ENCODE measurements at regions of chr3 and their contacts with region 1.

Region 1: GRCh38 chr3:57100046-57100695 is 39.7 kb downstream of the SPATA12 start:
- DNase-seq: peak; percentile 73
- H3K4me3 Mint-ChIP-seq: no peak overlapping the region
- H3K27ac Mint-ChIP-seq: no peak overlapping the region
- H3K4me1 Mint-ChIP-seq: no peaks in the 10 kb centered on the region
- H3K27me3 Mint-ChIP-seq: peaks cover 17% of the 10 kb centered on the region

Region 2: DNA sequence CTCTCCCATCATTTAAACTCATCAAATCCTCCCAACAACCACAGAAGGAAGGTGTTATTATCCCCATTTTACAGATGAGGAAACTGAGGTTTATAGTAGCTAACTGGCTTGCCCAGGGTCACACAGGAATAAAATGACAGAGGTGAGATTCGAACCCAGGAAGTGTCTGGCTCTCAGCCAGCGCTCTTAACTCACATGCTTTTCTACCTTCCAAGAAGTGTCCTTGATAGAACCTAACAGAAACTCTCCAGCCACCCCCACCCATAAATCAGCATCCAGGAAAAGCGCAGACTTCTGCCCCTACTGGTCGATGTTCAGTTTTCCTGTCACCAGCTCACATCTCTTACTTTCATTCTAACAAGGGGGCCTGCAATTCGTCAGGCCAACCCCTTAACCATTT is 12.0 kb after region 1 on chr3:
- CTCF ChIA-PET with region 1: interaction called, 18 read pairs
- DNase-seq: no peak
- H3K4me3 Mint-ChIP-seq: no peak overlapping the region
- H3K27ac Mint-ChIP-seq: no peak overlapping the region
- H3K4me1 Mint-ChIP-seq: no peaks in the 10 kb centered on the region
- H3K27me3 Mint-ChIP-seq: peaks cover 10% of the 10 kb centered on the region